ENCODE measurements at regions of chr19 and their contacts with region 1.

Region 1: DNA sequence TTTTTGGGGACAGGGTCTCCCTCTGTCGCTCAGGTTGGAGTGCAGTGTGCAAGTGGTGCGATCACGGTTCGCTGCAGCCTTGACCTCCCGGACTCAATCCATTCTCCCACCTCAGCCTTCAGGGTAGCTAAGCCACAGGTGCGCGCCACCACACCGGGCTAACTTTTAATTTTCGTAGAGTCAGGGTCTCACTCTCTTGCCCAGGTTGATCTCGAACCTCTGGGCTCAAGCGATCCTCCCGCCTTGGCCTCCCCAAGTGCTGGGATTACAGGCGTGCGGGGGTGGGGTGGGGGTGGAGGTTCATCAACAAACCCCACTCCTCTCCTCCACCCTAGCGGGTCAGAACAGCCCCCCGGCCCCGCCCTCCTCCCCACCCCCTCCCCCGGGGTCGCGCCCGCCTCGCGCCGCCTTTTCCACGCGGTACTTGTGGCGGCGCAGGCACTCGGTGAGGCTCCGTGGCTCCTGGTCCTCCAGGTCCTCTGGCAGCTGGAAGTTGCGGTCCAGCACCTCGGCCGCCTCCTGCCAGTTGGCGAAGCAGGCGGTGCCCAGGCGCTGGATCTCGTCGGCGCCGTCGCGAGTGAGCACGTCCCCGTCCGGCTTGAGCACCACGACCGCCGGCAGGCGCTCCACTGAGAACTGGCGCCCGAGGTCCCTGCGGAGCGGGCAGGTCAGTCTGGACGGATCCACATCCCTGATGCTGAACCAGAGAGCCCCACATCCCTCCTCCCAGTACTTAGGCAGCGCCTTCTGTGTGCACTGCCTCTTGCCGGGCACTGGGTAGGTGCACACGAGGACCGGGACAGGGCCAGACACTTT is 5.2 kb downstream of the NXNL1 start:
- DNase-seq: no peak
- H3K4me3 ChIP-seq: no peak overlapping the region
- H3K27me3 ChIP-seq: peaks cover 9% of the 10 kb centered on the region
- CTCF ChIP-seq: no peak

Region 2: GRCh38 chr19:17429641-17430113 is 25.8 kb before region 1 on chr19:
- CTCF ChIA-PET with region 1: no interaction called
- POLR2A ChIA-PET with region 1: interaction called, 14 read pairs
- DNase-seq: no peak
- H3K4me3 ChIP-seq: no peak overlapping the region
- H3K27me3 ChIP-seq: no peaks in the 10 kb centered on the region
- CTCF ChIP-seq: no peak

Region 3: GRCh38 chr19:17470068-17470841 is 14.7 kb after region 1 on chr19 and contains the start of gene SLC27A1:
- CTCF ChIA-PET with region 1: interaction called, 23 read pairs
- POLR2A ChIA-PET with region 1: no interaction called
- DNase-seq: peak; percentile 97
- H3K4me3 ChIP-seq: peak within 1 kb of the TSS; percentile 91
- H3K27me3 ChIP-seq: no peaks in the 10 kb centered on the region
- CTCF ChIP-seq: no peak
- polyA plus RNA-seq, gene SLC27A1: 12.0 and 18.8 TPM in 2 replicates

Measured in BJ (cell line).